ENCODE measurements at regions of chr3 and their contacts with region 1.

Region 1: GRCh38 chr3:172710664-172711453 is at the start of gene NCEH1:
- DNase-seq: peak; percentile 95 to 98
- ATAC-seq: peak; percentile 97 to 98
- H3K4me3 ChIP-seq: peak within 1 kb of the TSS; percentile 92
- H3K27ac ChIP-seq: peak within 1 kb of the TSS; percentile 86 to 93
- H3K4me1 ChIP-seq: peaks cover 38% of the 10 kb centered on the region
- CTCF ChIP-seq: peak; percentile 87
- EP300 ChIP-seq: peak in 1 of 2 experiments; percentile 30; a peak in 1 of 5 replicates
- POLR2A ChIP-seq: peak; percentile 97
- RAD21 ChIP-seq: peak; percentile 76 to 84
- polyA plus RNA-seq, gene NCEH1: 32.2 and 33.2 TPM in 2 replicates

Region 2: GRCh38 chr3:172622916-172623700 is 87.8 kb before region 1 on chr3:
- CTCF ChIA-PET with region 1: interaction called, 4 read pairs
- POLR2A ChIA-PET with region 1: interaction called, 16 read pairs
- DNase-seq: peak in 1 of 2 experiments; percentile 44
- ATAC-seq: peak; percentile 56 to 76; a peak in 3 of 6 replicates
- H3K4me3 ChIP-seq: peak overlapping the region; percentile 63
- H3K27ac ChIP-seq: peak overlapping the region; percentile 89 to 97
- H3K4me1 ChIP-seq: peaks cover 40% of the 10 kb centered on the region
- CTCF ChIP-seq: peak; percentile 70
- EP300 ChIP-seq: no peak
- POLR2A ChIP-seq: no peak
- RAD21 ChIP-seq: peak in 1 of 2 experiments; percentile 34; a peak in 1 of 5 replicates

Region 3: GRCh38 chr3:172646439-172647015 is 64.3 kb before region 1 on chr3:
- CTCF ChIA-PET with region 1: no interaction called
- POLR2A ChIA-PET with region 1: no interaction called
- DNase-seq: no peak
- ATAC-seq: no peak
- H3K4me3 ChIP-seq: no peak overlapping the region
- H3K27ac ChIP-seq: no peak overlapping the region
- H3K4me1 ChIP-seq: peaks cover 28% of the 10 kb centered on the region
- CTCF ChIP-seq: no peak
- EP300 ChIP-seq: no peak
- POLR2A ChIP-seq: no peak
- RAD21 ChIP-seq: no peak

Region 4: GRCh38 chr3:172692751-172693338 is 18.0 kb before region 1 on chr3:
- CTCF ChIA-PET with region 1: interaction called, 13 read pairs
- POLR2A ChIA-PET with region 1: no interaction called
- DNase-seq: no peak
- ATAC-seq: no peak
- H3K4me3 ChIP-seq: no peak overlapping the region
- H3K27ac ChIP-seq: no peak overlapping the region
- H3K4me1 ChIP-seq: peaks cover 29% of the 10 kb centered on the region
- CTCF ChIP-seq: no peak
- EP300 ChIP-seq: no peak
- POLR2A ChIP-seq: no peak
- RAD21 ChIP-seq: no peak

Region 5: DNA sequence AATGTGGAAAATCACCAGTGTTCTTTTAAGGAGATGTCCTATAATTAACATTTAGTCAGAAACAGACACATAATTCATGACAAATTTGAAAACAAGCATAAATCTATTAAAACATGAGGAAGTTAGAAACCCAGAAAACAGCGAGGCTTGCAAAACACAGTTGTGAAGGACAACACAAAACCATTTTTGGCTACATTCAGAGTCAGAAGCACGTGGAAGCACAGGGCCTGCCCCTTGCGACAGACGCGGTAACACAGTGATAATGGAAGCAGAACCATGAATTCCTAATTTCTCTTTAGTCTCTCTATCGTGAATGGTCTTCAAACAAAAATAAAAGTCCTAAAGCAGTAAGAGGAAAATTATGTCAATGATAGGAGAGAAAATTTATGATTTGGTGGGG is 12.2 kb before region 1 on chr3:
- CTCF ChIA-PET with region 1: interaction called, 30 read pairs
- POLR2A ChIA-PET with region 1: interaction called, 3 read pairs
- DNase-seq: no peak
- ATAC-seq: no peak
- H3K4me3 ChIP-seq: no peak overlapping the region
- H3K27ac ChIP-seq: no peak overlapping the region
- H3K4me1 ChIP-seq: peaks cover 9% of the 10 kb centered on the region; the same call in 2 of the 3 replicates
- CTCF ChIP-seq: no peak
- EP300 ChIP-seq: no peak
- POLR2A ChIP-seq: no peak
- RAD21 ChIP-seq: no peak